H1 (cell line): ENCODE measurements at regions of chr14 and their contacts with region 1.

Region 1: GRCh38 chr14:61493239-61493638 is 171.9 kb downstream of the PRKCH start:
- DNase-seq: no peak
- H3K4me3 ChIP-seq: no peak overlapping the region
- H3K27ac ChIP-seq: no peak overlapping the region
- H3K4me1 ChIP-seq: peaks cover 0 to 2% (median under 1%) of the 10 kb centered on the region in 4 experiments; a peak in 2 of 7 replicates
- H3K27me3 ChIP-seq: no peaks in the 10 kb centered on the region
- CTCF ChIP-seq: no peak
- EP300 ChIP-seq: no peak
- POLR2A ChIP-seq: no peak
- RAD21 ChIP-seq: no peak

Region 2: DNA sequence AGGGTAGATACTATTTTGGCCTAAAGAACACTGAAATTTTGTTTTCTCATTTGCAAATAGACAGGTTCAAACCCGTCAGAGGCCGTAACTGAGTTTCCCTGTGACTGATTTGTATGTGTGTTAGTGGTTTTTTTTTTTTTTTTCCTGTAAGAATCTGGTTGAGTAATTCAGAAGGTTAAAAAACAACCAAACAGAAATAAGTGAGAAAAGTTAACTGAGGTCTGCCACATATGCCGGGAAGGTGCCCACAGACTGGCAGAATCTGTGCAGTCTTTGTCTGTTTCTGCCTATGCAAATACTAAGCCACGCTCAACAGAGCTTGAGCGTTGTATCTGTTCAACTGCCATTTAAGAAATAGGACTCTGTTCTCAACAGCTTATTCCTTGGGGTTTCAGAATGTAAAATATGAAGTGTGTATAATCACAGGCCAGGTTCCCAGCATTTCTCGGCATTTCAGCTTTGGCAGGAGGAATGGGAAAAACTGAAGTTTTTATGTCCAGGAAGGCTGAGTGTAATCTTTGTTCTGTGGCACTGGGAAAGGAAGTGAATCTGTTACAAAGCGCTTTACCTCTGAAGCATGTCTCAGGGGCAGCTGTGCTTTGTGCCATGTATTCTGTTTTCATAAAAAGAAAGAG is 10.0 kb after region 1 on chr14:
- CTCF ChIA-PET with region 1: interaction called, 4 read pairs
- POLR2A ChIA-PET with region 1: interaction called, 11 read pairs
- DNase-seq: no peak
- H3K4me3 ChIP-seq: no peak overlapping the region
- H3K27ac ChIP-seq: peak overlapping the region; percentile 66
- H3K4me1 ChIP-seq: peaks cover 10 to 30% (median 22%) of the 10 kb centered on the region in 4 experiments
- H3K27me3 ChIP-seq: no peaks in the 10 kb centered on the region
- CTCF ChIP-seq: no peak
- EP300 ChIP-seq: no peak
- POLR2A ChIP-seq: no peak
- RAD21 ChIP-seq: no peak